Endothelial cell of umbilical vein (primary cell): ENCODE measurements at regions of chr1 and their contacts with region 1.

Region 1: GRCh38 chr1:44103270-44104131 is 15.1 kb upstream of the KLF17 start:
- DNase-seq: no peak
- H3K4me3 ChIP-seq: no peak overlapping the region
- H3K27ac ChIP-seq: no peak overlapping the region
- H3K4me1 ChIP-seq: no peaks in the 10 kb centered on the region
- H3K27me3 ChIP-seq: peaks cover 0 to 6% of the 10 kb centered on the region in 2 experiments
- CTCF ChIP-seq: peak in 1 of 2 donors; percentile 30
- POLR2A ChIP-seq: no peak

Region 2: DNA sequence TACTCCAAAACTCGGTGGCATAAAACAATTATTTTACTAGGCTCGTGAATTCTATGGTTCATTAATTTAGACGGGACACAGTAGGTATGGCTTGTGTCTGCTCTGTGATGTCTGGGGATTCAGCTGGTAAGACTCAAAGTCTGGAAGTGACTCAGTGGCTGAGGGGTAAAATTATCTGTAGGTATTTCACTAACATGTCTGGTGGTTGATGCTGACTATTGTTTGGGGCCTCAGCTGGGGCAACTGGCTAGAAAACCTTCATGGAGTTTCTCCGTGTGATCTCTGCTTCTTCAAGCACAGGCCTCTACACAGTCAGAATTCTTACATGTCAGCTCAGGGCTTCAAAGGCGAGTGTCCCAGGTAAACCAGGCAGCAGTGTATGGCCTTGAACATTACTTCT is 26.1 kb before region 1 on chr1:
- CTCF ChIA-PET with region 1: no interaction called
- POLR2A ChIA-PET with region 1: no interaction called
- dilution Hi-C with region 1: no loop called
- intact Hi-C with region 1: no loop called
- DNase-seq: no peak
- H3K4me3 ChIP-seq: no peak overlapping the region
- H3K27ac ChIP-seq: no peak overlapping the region
- H3K4me1 ChIP-seq: no peaks in the 10 kb centered on the region
- H3K27me3 ChIP-seq: peaks cover 3 to 8% of the 10 kb centered on the region in 2 experiments
- CTCF ChIP-seq: no peak
- POLR2A ChIP-seq: no peak

Region 3: GRCh38 chr1:44090429-44091252 is 12.9 kb before region 1 on chr1:
- CTCF ChIA-PET with region 1: interaction called, 15 read pairs
- POLR2A ChIA-PET with region 1: no interaction called
- dilution Hi-C with region 1: no loop called
- intact Hi-C with region 1: no loop called
- DNase-seq: no peak
- H3K4me3 ChIP-seq: no peak overlapping the region
- H3K27ac ChIP-seq: no peak overlapping the region
- H3K4me1 ChIP-seq: no peaks in the 10 kb centered on the region
- H3K27me3 ChIP-seq: peaks cover 1 to 15% of the 10 kb centered on the region in 2 experiments
- CTCF ChIP-seq: no peak
- POLR2A ChIP-seq: no peak

Region 4: DNA sequence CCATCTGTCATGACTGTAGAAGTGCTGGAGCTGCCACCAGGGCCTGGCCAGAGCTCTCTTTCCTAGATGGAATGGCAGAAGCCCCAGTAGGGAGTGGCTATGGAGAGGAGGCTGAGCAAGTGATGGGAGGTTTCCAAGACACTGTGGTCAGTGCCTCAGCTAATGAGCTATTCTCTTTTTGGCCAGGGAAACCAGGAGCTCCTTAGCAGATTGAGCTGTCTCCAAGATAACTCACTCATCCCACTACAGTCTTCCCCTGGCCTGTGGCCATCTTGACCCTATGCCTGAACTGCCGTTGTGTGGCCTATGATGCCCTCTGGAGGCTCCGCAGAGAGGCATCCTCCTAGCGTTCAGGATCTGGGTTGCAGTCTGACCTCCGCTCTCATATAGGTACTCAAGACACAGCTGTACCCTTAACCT is 191.1 kb after region 1 on chr1:
- CTCF ChIA-PET with region 1: no interaction called
- POLR2A ChIA-PET with region 1: no interaction called
- dilution Hi-C with region 1: no loop called
- intact Hi-C with region 1: no loop called
- DNase-seq: no peak
- H3K4me3 ChIP-seq: no peak overlapping the region
- H3K27ac ChIP-seq: no peak overlapping the region
- H3K4me1 ChIP-seq: no peaks in the 10 kb centered on the region
- H3K27me3 ChIP-seq: no peaks in the 10 kb centered on the region
- CTCF ChIP-seq: no peak
- POLR2A ChIP-seq: no peak